Panc1 (cell line): ENCODE measurements at regions of chr9 and their contacts with region 1.

Region 1: GRCh38 chr9:35732122-35732799 is at the starts of genes CREB3 and TLN1:
- DNase-seq: peak; percentile 85
- ATAC-seq: peak; percentile 93
- H3K4me3 ChIP-seq: peak within 1 kb of the TSS; percentile 82 to 99
- H3K27ac ChIP-seq: peak within 1 kb of the TSS; percentile 95
- H3K4me1 ChIP-seq: peaks cover 49% of the 10 kb centered on the region
- H3K27me3 ChIP-seq: no peaks in the 10 kb centered on the region
- CTCF ChIP-seq: no peak
- total RNA-seq, gene CREB3: 67.0 TPM
- total RNA-seq, gene TLN1: 347 TPM

Region 2: DNA sequence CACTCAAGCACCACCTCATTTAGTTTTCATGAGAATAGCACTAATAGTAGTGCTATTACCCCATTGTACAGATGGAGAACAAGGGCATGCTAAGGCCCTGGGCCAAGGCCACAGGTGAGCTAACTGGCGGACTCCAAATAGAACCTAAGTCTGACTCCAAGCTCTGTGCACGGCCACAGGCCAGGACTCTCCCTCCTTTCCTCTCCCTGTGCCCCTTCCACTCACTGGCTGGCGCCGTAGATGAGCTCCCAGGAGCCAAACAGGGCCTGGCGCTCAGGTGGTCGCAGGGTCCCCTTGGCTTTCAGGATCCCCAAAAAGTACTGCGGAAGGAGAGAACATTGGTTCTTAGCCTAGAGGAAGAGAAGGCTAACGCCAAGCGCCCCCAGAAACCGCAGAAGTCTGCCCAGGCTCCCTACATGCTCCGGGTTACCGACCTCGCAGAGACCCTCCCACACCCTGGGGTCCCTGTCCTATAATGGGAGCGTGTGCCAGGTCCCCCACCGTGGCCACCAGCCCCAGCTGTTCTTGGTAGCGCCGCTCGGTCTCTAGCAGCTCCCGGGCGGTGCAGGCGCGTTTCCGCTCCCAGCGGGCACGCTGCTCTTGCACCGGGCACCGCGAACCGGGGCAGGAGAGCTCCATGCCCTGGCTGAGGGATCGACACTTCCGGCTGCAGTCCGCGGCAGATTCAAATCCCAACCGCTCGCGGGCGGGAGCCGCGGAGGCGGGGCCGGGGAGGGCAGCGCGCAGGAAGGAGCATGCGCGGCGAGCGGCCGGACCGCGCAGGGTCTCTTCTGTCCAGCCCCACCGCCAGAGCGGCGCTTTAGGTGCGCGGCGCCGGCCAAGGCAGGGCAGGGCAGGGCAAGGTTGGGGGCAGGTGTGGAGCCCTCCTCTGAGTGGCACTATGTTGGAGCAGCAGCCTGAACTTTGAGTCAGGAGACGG is 67.5 kb before region 1 on chr9 and contains the start of gene ARHGEF39:
- CTCF ChIA-PET with region 1: interaction called, 3 read pairs
- POLR2A ChIA-PET with region 1: interaction called, 7 read pairs
- in situ Hi-C with region 1: no loop called
- intact Hi-C with region 1: loop called (anchors 5 kb)
- DNase-seq: no peak
- ATAC-seq: peak; percentile 93
- H3K4me3 ChIP-seq: peak within 1 kb of the TSS; percentile 64 to 83
- H3K27ac ChIP-seq: peak within 1 kb of the TSS; percentile 97
- H3K4me1 ChIP-seq: peaks cover 55% of the 10 kb centered on the region
- H3K27me3 ChIP-seq: no peaks in the 10 kb centered on the region
- CTCF ChIP-seq: no peak
- total RNA-seq, gene ARHGEF39: 34.0 TPM

Region 3: DNA sequence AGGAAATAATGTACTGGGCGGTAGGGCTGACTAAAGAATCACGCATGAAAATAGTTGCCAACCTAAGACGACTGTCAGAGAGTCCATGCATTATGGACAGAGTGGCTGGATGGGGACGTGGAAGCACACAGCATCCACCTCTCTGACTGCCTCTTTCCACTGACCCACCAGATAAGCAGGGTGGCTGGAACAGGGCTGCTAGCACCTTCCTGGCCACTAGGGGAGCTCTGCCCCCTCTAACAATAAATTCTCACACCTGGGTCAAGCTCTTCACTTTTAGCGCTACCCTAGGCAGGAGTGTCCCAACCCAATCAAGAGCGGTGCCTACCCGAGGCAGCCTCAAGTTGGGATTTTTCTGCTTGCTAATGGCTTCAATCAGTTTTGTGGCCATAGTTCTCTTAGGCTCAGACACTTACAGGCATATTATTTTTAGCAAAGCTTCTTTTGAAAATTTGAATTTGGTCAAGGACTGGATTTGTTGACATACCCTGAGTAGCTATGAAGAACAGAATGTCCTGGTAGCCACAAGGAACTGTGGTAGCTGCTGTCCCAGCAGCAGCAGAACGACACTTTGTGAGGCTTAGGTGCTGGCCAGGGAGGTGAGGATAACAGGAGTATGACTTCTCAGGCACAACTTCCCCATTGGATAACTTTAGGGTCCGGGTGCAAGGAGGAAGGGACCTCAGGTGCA is 35.6 kb before region 1 on chr9:
- CTCF ChIA-PET with region 1: interaction called, 13 read pairs
- POLR2A ChIA-PET with region 1: interaction called, 3 read pairs
- in situ Hi-C with region 1: no loop called
- intact Hi-C with region 1: no loop called
- DNase-seq: peak; percentile 57
- ATAC-seq: peak; percentile 88
- H3K4me3 ChIP-seq: no peak overlapping the region
- H3K27ac ChIP-seq: no peak overlapping the region
- H3K4me1 ChIP-seq: peaks cover 4% of the 10 kb centered on the region; the same call in 1 of the 2 replicates
- H3K27me3 ChIP-seq: no peaks in the 10 kb centered on the region
- CTCF ChIP-seq: no peak

Region 4: GRCh38 chr9:35814841-35815543 is 82.7 kb after region 1 on chr9 and contains the start of gene HINT2:
- CTCF ChIA-PET with region 1: no interaction called
- POLR2A ChIA-PET with region 1: interaction called, 10 read pairs
- in situ Hi-C with region 1: no loop called
- intact Hi-C with region 1: no loop called
- DNase-seq: peak; percentile 91
- ATAC-seq: peak; percentile 94
- H3K4me3 ChIP-seq: peak within 1 kb of the TSS; percentile 88 to 90
- H3K27ac ChIP-seq: peak within 1 kb of the TSS; percentile 85
- H3K4me1 ChIP-seq: peaks cover 29% of the 10 kb centered on the region
- H3K27me3 ChIP-seq: peaks cover 3% of the 10 kb centered on the region; the same call in 1 of the 2 replicates
- CTCF ChIP-seq: no peak
- total RNA-seq, gene HINT2: 75.6 TPM